ENCODE measurements at regions of chr16 and their contacts with region 1.

Region 1: GRCh38 chr16:53549970-53550690 is 47.1 kb upstream of the AKTIP start:
- DNase-seq: peak; percentile 70
- ATAC-seq: peak; percentile 96

Region 2: GRCh38 chr16:53530046-53530445 is 20.1 kb before region 1 on chr16:
- intact Hi-C with region 1: loop called (anchors 2 kb)
- DNase-seq: no peak
- ATAC-seq: no peak

Measured in sciatic nerve (tissue), 2 donors.